Panc1 (cell line): ENCODE measurements at regions of chr6 and their contacts with region 1.

Region 1: DNA sequence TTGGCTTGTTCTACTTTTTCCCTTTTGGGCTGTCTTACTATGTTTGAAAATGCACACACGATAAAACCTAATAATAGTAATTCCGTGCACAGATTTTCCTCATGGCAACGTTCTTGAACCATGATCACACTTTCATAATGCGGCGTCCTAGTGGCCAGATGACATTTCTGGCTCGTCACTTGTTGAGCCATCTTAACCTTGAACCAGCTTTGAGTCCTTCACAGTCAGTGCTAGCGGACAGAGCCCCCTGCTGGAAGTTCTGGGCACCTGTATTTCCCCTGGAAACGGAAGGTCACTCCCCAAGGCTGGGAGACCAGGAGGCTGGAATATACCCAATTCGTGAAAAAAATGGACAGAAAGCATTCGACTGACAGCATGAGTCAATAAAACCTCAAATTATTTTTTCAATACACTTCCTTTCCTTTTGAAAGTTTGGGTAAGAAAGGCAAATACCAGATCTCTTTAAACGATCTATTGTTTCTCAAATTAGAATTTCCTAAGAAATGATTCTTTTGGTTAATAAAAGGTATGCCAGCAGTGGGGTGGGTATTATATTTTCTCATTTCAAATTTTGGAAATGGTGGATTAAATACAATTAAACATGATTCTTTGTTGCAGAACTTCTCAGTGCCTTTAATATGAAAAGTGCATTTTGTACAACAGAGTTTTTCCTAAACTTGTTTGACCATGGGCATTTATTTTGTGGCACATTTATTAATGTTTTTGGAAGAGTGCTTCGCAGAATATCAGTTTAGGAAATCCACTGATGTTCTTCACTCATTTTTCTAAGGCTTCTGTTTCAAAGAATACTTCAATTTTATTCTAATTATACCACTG is 542.3 kb downstream of the QKI start:
- DNase-seq: peak; percentile 48
- ATAC-seq: peak; percentile 90
- H3K4me3 ChIP-seq: no peak overlapping the region
- H3K27ac ChIP-seq: no peak overlapping the region
- H3K4me1 ChIP-seq: no peaks in the 10 kb centered on the region
- H3K27me3 ChIP-seq: peaks cover 5% of the 10 kb centered on the region; the same call in 1 of the 2 replicates
- CTCF ChIP-seq: peak; percentile 89

Region 2: DNA sequence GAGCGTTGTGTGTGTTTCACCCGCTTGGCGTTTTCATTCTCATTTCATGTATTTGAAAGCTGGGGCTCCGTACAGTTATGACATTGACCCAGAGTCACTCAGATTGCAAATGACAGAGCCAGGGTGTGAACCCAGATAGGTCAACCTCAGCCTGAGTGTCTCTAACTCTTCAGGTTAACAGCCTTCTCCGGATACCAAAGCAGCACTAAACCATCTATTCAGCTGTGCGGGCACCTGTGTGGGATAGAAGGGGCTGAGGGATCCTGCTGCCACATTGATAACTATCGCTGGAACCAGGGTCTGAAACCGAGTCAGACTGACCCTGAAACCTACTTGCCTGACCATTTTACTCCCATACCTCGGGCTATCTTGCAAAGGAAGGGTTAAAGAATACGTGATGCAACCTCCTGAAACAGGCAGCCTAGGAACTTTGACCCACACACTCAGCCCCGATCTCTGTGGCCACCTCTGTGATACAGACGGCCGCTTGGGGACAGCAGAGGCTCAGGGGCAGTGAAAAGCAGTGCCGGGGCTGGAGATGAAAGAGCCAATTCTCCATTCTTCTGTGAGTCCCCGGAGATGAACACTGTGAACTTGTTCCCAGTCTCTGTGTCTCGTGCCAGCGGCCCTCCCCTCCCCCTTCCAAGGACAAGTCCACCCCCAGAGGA is 775.8 kb before region 1 on chr6:
- CTCF ChIA-PET with region 1: no interaction called
- POLR2A ChIA-PET with region 1: no interaction called
- in situ Hi-C with region 1: no loop called
- intact Hi-C with region 1: loop called (anchors 10 kb)
- DNase-seq: peak; percentile 50
- ATAC-seq: peak; percentile 97
- H3K4me3 ChIP-seq: 0 out of 4 replicates have a peak overlapping the region, but pooled peaks of 1 of the 2 experiments have one; percentile 5
- H3K27ac ChIP-seq: peak overlapping the region; percentile 87; the same call in 1 of the 2 replicates
- H3K4me1 ChIP-seq: peaks cover 11% of the 10 kb centered on the region
- H3K27me3 ChIP-seq: no peaks in the 10 kb centered on the region
- CTCF ChIP-seq: peak; percentile 95

Region 3: DNA sequence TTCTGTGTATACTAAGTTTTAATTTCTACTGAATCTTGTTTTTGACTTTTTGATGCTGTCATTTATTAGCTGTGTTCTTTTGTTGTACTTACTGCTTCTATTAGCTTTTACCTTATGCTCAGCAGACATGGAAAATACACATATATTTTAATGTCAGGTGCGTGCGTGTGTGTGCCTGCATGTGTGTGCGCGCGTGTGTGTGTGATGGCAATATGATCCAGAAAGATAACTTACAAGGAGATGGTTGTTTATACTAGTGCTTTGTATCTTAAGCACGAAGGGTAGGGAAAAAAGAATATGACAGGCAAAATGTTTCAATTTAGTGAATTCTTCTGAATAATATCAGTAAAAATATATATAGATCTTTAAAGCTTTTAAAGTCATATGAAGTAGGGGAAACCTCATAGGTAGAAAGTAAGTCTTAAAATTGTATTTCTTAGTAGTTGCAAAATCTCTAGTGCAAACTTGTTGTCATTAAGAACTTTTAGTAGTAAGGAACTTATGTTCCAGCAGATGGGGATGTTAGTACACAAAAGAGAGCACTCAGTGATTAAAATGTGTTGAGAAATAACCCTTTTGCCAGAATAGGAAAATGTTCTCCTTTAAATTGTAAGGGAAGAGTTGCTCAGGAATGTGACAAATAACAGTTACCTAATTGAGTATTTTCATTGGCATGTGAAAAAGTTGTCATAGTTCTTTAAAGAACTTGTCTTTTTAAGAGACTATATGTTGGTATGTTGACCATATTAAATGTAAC is 529.1 kb before region 1 on chr6:
- CTCF ChIA-PET with region 1: no interaction called
- POLR2A ChIA-PET with region 1: no interaction called
- in situ Hi-C with region 1: no loop called
- intact Hi-C with region 1: loop called (anchors 5 kb)
- DNase-seq: no peak
- ATAC-seq: no peak
- H3K4me3 ChIP-seq: no peak overlapping the region
- H3K27ac ChIP-seq: no peak overlapping the region
- H3K4me1 ChIP-seq: peaks cover 35% of the 10 kb centered on the region
- H3K27me3 ChIP-seq: no peaks in the 10 kb centered on the region
- CTCF ChIP-seq: peak; percentile 23; the same call in 1 of the 2 replicates

Region 4: GRCh38 chr6:164927288-164928056 is 970.7 kb after region 1 on chr6:
- CTCF ChIA-PET with region 1: no interaction called
- POLR2A ChIA-PET with region 1: no interaction called
- in situ Hi-C with region 1: no loop called
- intact Hi-C with region 1: loop called (anchors 10 kb)
- DNase-seq: peak; percentile 36
- ATAC-seq: peak; percentile 95
- H3K4me3 ChIP-seq: no peak overlapping the region
- H3K27ac ChIP-seq: no peak overlapping the region
- H3K4me1 ChIP-seq: no peaks in the 10 kb centered on the region
- H3K27me3 ChIP-seq: no peaks in the 10 kb centered on the region
- CTCF ChIP-seq: peak; percentile 98